Activated CD4-positive, alpha-beta T cell treated with anti-CD3 and anti-CD28 coated beads, Interleukin-2, amount 10 ng/mL, durations not matched to agents 7 days and 5 days (primary cell): ENCODE measurements at regions of chr5 and their contacts with region 1.

Region 1: DNA sequence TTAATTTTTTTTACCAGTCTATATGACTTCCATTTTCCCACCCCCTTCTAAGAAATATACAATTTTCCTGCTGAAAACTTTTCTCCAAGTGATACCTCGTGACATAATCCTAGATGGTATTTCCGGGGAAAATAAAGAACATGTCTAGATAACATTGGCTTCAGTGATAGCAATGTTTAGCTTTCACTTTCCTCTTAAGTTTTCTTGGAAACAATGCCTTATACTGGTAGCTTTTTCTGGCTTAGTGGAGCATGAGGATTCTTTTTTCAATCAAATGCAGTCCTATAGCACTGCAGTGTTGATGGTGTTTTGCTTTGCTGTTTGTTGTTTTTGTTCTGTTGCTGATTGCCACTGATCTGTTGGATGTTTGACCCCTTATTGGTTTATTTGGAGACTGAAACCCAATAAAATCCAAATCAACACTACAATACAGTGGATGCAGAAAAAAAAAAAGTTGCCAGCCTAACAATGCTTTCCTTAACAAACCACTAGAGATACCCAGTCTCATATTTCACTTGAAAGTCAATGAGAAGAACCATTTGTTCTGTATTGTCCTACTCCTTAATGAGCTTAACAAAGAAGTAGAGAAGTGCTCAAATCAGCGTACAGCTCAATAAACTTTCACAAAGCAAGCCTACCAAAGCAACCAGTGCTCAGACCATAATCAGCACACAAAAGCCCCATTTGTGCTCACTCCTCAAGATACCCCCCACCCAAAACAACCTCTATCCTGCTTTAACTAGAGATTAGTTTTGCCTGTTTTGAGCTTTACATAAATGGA is 74.2 kb upstream of the GRAMD2B start:
- DNase-seq: no peak
- H3K4me3 Mint-ChIP-seq: no peak overlapping the region
- H3K27ac Mint-ChIP-seq: no peak overlapping the region
- H3K4me1 Mint-ChIP-seq: peaks cover 2% of the 10 kb centered on the region
- H3K27me3 Mint-ChIP-seq: peaks cover 26% of the 10 kb centered on the region

Region 2: DNA sequence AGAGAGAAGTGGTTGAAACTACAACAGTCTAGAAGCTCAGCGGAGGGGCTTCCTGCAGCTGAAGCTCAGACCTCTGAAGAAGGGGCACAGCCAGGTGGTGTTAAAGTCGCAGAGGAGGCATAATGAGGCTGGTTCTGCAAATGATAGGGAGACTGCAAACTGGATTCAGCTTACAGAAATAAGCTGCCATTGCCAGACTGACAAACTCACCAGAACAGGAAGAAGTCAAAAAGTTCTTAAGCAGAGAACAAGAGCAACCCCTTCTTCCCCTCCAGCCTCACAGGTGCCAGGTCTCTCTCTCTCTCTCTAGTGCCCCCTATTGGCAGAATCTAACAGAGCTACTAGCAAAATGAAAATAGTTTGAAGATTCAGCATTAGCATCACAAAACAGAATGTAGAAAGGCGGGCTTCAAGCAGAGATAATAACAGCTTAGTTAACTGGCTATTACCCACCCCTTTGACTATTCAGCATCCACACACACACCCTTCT is 150.9 kb after region 1 on chr5:
- CTCF ChIA-PET with region 1: interaction called, 10 read pairs
- POLR2A ChIA-PET with region 1: no interaction called
- DNase-seq: peak; percentile 56
- H3K4me3 Mint-ChIP-seq: no peak overlapping the region
- H3K27ac Mint-ChIP-seq: no peak overlapping the region
- H3K4me1 Mint-ChIP-seq: peaks cover 16% of the 10 kb centered on the region
- H3K27me3 Mint-ChIP-seq: no peaks in the 10 kb centered on the region